Right ventricle myocardium superior (tissue), 1 donor: ENCODE measurements at regions of chr2 and their contacts with region 1.

Region 1: GRCh38 chr2:75464348-75464946 is 96.3 kb downstream of the EVA1A start:
- DNase-seq: no peak
- ATAC-seq: no peak

Region 2: DNA sequence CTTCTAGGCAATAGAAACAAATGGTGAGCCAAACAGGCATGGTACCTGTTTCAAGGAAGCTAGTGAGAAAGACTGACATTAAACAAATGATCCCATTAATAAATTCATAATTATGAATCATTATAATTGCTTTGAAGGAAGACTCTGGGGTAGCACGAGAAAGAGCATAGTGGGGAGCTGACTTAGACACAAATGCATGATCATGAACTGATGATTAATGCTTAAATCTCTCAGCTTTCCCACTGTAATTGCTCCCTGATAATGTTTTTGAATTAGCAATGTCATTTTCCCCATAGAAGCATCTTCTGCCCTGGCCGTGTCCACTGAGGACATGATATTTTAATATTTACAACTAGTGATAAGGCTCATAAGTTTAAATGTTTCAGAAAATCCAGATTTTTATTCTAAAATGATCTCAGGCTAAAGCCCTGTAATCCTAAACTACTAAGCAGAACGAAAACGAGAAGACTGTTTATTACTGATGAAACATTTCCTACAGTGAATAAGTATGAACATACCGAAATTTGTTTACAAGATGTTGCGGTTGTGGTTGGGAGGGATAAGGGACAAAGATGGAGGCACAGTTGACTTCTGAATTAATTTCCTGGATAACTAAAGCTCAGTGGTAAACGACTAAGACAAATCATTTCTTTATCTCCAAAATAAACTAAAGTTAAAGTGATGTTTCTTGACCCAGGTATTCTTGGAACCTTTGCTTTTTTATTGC is 217.8 kb before region 1 on chr2:
- intact Hi-C with region 1: no loop called
- DNase-seq: no peak
- ATAC-seq: no peak

Region 3: DNA sequence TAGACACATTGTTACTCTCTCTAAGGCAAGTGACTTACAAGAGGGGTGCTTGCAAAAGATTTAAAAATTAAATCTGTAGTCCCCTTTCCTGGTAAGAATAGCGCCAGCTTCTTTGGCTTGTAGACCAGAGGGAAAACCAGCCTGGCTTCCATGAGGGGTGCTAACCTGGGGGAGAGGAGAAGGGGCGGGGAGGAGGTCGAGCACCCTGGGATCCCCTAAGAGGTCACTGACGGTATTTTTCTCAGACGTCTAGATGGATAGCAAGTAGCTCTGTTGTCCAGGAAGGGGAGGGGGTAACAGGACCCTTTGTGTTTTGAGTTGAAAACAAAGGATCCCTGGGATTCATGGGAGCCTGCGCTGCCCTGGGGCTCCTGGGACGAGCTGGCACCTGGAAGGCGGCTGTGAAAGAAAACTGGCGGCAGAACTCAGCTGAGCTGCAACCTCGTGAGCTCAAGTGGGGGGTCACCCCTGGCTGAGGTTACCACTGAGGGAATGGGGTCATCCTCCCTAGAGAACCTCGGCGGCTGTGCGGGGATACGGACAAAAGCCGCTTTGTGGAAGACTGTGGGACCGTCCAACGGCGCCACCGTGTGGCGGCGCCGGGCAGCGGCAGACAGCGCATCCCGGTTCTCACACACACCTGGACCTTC is 144.4 kb after region 1 on chr2:
- intact Hi-C with region 1: loop called (anchors 2 kb)
- DNase-seq: peak; percentile 63
- ATAC-seq: peak; percentile 94